ENCODE measurements at regions of chr14 and their contacts with region 1.

Region 1: DNA sequence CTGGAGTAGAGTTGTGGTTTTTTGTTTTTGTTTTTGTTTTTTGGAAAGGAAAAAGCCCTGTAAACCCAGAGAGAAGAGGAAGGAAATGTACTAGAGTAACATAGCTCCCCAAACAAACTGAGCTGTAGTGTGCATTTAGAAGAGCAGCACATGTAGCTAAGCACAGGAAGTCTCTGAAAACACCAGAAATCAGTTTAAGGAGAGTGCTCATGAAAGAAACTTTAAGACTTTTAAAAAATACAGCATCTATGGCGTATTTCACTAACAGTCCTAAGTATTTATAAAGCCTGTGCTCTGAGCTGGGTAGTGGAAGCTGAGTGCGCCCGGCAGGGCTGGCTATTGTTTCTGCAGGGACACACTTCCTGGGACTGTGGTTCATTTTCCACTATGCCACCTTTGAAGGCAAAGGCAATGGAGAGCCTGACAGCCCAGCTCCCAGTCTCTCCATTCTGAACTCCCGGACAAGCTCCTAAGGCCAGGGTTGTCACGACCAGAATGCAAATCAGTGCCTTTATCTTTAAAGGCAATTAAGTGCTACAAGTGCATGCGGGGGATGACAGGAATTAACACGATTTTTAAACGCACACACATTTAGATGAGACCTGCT is 45.4 kb downstream of the NIN start:
- DNase-seq: no peak

Region 2: GRCh38 chr14:50697659-50698290 is 87.8 kb before region 1 on chr14:
- CTCF ChIA-PET with region 1: no interaction called
- POLR2A ChIA-PET with region 1: no interaction called
- DNase-seq: no peak

Region 3: GRCh38 chr14:50860478-50861086 is 75.0 kb after region 1 on chr14:
- CTCF ChIA-PET with region 1: interaction called, 11 read pairs
- POLR2A ChIA-PET with region 1: interaction called, 3 read pairs
- DNase-seq: peak; percentile 80